Activated naive CD8-positive, alpha-beta T cell treated with anti-CD3 and anti-CD28 coated beads, Interleukin-2, amount 10 ng/mL, durations not matched to agents 7 days and 5 days (primary cell): ENCODE measurements at regions of chr1 and their contacts with region 1.

Region 1: DNA sequence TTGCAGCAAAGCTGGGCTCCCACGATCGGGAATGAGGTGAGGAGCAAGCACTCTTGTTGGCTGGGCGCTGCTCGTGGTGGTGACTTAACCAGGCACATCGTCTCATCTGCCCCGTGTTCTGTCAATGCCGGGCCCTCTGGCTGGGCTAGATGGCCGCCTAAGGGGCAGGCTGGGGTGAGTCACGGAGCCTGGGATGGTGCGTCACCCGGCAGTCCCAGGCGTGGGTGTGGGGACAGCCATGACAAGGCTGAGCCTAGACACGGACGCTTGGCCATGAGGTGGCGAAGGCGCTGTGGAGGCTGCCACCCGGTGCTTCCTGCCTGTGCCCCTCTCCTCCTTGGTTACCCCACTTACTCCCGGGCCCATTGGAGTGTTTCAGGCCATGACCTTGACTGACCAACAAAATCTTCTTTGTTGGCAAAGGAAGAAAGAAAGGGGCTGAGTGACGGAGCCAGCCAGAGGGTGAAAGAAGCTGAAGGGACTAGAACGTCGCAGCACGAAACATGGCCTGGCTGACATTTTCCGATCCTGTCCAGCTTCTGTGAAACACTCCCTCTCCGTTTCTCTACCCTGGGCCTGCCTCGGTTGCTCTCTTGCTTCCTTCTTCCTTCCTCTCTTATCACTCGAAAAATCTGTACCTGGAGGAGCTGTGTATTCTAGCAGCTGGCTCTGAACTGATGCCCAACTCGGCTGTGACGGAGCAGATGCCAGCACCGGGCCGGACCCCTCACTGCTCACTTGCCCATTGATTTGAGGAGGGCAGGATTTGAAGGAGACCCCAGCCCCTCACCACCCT is 596 bp downstream of the CD247 start:
- DNase-seq: peak; percentile 78
- ATAC-seq: peak; percentile 80
- H3K4me3 Mint-ChIP-seq: peak overlapping the region; percentile 96
- H3K27ac Mint-ChIP-seq: peak overlapping the region; percentile 98
- H3K4me1 Mint-ChIP-seq: peaks cover 28% of the 10 kb centered on the region
- H3K27me3 Mint-ChIP-seq: no peaks in the 10 kb centered on the region

Region 2: DNA sequence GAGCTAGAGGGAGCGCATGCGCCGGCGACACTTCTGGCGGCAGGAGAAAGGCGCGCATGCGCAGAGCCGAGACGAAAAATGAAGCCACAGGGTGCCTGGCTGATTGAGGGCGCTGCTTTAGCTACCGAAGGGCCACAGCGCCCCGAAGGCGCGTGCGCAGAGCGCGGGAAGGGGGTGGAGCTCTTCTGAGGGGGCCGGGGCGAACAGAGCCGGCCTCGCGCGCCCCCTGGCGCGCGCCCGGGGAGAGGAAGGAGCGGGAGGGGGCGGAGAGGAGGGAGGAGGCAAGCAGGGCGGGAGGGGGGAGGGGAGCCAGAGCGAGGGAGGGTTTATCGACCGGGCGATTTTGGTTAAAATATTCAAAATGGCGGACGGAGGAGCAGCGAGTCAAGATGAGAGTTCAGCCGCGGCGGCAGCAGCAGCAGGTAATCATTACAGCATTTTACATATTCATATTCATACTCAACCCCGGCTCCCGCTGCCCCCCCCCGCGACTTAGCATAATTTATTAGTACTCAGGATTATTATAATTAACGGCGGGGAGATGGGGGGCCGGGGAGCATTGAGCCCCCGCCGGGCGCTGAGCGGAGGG is 297.1 kb before region 1 on chr1 and contains the start of gene POU2F1:
- POLR2A ChIA-PET with region 1: interaction called, 16 read pairs
- DNase-seq: peak; percentile 99
- ATAC-seq: peak; percentile 82
- H3K4me3 Mint-ChIP-seq: peak within 1 kb of the TSS; percentile 94
- H3K27ac Mint-ChIP-seq: peak within 1 kb of the TSS; percentile 100
- H3K4me1 Mint-ChIP-seq: peaks cover 32% of the 10 kb centered on the region
- H3K27me3 Mint-ChIP-seq: no peaks in the 10 kb centered on the region
- total RNA-seq, gene POU2F1: 25.6 to 28.0 TPM

Region 3: DNA sequence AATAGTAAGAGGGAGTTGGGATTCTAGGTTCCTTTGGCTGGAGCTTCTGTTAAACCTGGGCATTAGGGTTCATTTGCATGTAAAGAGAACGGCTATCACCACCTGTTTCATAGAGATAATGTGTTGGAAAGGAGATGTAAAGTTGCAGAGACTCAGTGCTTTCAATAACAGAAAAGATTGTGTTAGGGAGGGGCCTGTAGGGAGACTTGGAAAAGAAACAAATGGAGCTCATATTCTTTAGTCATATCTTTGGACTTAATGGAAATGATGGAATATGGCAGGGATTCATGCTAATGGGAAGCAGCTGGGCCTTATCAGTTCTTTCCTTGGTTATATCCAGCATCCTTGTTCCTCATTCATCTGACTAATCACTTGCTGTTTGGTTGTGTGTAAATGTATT is 144.3 kb before region 1 on chr1:
- POLR2A ChIA-PET with region 1: no interaction called
- DNase-seq: no peak
- ATAC-seq: no peak
- H3K4me3 Mint-ChIP-seq: no peak overlapping the region
- H3K27ac Mint-ChIP-seq: no peak overlapping the region
- H3K4me1 Mint-ChIP-seq: no peaks in the 10 kb centered on the region
- H3K27me3 Mint-ChIP-seq: no peaks in the 10 kb centered on the region

Region 4: DNA sequence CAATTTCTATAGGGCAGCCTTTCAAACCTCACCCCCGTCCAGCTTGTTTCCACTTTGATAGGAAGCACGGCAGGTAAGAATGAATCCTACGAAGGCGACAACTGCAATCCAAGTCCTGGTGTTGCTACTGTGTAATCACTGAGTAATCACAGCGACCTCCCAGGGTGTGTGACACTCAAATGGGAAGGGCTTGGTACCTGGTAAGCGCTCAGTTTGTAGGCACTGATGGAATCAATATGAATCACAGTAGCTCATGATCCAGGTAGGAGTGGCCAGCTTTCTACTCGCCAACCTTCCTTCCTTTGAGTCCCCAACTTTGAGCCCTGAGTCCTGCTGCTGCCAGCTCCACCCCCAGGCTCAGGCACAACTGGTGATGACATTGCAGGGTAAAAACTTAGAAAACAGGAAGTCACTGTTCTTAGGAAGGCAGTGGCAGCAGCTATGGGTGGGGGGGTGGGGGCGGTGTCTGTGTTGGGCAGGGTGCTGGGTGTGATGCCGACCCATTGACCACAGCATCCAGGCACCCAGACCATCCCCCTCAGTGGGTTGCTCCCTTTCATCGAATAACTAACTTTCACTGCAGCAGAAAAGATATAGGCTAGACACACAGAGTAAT is 70.1 kb before region 1 on chr1:
- POLR2A ChIA-PET with region 1: interaction called, 63 read pairs
- DNase-seq: peak; percentile 62
- ATAC-seq: peak; percentile 87
- H3K4me3 Mint-ChIP-seq: peak overlapping the region; percentile 79
- H3K27ac Mint-ChIP-seq: peak overlapping the region; percentile 95
- H3K4me1 Mint-ChIP-seq: peaks cover 65% of the 10 kb centered on the region
- H3K27me3 Mint-ChIP-seq: no peaks in the 10 kb centered on the region

Region 5: DNA sequence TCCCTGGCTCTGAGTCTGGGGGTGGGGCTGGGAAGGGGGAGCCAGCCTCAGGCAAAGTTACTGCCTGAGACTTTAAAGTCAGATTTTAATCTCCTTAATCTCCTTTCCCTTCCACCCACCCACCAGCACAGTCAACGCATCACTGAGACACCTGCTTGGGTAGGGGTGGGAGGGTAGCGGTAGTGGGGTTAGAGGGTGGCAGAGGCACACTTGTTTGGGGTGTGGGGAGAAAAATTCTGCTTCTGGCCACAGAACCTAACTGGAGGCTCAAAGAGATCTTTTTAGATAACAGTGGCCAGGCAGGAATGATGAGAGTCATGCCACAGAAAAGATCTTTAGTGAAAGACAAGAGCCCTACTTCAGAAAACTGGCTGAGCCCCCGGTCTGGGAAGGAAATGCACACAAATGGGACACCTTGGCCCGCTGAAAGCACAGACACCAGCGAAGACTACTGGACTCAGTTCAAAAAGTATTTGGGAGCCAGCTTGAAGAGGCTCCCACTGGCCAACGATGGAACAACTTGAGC is 43.5 kb before region 1 on chr1:
- POLR2A ChIA-PET with region 1: interaction called, 19 read pairs
- DNase-seq: no peak
- ATAC-seq: peak; percentile 71
- H3K4me3 Mint-ChIP-seq: peak overlapping the region; percentile 75
- H3K27ac Mint-ChIP-seq: peak overlapping the region; percentile 83
- H3K4me1 Mint-ChIP-seq: peaks cover 60% of the 10 kb centered on the region
- H3K27me3 Mint-ChIP-seq: no peaks in the 10 kb centered on the region

Region 6: DNA sequence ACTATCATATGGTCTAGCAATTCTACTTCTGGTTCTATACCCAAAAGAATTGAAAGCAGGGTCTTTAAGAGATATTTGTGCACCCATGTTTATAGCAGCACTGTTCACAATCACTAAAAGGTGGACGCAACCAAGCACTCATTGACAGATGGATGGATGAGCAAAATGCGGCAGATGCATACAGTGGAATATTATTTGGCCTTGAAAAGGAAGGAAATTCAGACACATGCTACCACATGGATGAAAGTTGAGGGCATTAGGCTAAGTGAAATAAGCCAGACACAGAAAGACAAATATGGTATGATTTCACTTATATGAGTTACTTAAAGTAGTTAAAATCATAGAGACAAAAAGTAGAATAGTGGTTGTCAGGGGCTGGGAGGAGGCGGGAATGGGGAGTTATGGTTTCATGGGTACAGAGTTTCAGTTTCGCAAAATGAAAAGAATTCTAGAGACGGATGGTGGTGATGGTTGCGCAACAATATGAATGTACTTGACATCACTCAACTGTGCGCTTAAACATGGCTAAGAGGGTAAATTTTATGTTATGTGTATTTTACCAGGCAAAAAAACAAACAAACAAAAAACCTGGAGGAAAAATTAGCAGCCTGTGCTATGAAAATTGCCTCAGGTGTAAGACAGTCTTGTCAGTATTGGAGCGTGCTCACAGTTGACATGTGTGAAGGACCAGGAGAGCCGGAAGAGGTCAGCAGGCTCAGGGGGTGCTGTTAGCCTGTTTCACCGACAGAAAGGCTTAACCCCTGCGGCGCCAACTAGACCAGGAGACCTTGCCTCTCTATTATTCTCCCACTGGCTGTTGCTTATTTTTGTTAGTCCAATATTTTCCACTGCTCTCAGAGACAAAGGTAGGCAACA is 25.9 kb before region 1 on chr1:
- POLR2A ChIA-PET with region 1: interaction called, 31 read pairs
- DNase-seq: no peak
- ATAC-seq: peak; percentile 70
- H3K4me3 Mint-ChIP-seq: peak overlapping the region; percentile 85
- H3K27ac Mint-ChIP-seq: peak overlapping the region; percentile 93
- H3K4me1 Mint-ChIP-seq: peaks cover 79% of the 10 kb centered on the region
- H3K27me3 Mint-ChIP-seq: no peaks in the 10 kb centered on the region

Region 7: GRCh38 chr1:167533851-167534300 is 16.1 kb after region 1 on chr1:
- POLR2A ChIA-PET with region 1: interaction called, 25 read pairs
- DNase-seq: peak; percentile 67
- ATAC-seq: peak; percentile 66
- H3K4me3 Mint-ChIP-seq: no peak overlapping the region
- H3K27ac Mint-ChIP-seq: no peak overlapping the region
- H3K4me1 Mint-ChIP-seq: peaks cover 7% of the 10 kb centered on the region
- H3K27me3 Mint-ChIP-seq: peaks cover 8% of the 10 kb centered on the region

Region 8: DNA sequence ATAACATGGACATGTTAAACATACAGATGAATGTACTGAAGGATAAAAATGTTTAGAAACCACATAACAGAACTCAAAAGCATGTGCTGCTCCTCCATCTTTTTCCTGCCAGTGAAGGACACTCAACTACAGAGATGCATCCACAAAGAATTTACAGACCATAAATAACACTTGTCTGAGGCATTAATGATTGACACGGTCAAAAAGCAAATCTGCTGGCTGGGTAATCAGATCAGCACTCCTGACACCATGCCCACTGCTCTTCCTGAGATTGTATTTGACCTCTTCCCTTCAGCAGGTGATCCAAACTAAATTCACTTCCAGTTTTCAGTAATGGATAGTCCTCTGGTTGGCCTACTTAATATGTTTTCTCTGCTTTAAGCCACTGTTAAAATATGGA is 29.2 kb after region 1 on chr1:
- POLR2A ChIA-PET with region 1: no interaction called
- DNase-seq: no peak
- ATAC-seq: no peak
- H3K4me3 Mint-ChIP-seq: no peak overlapping the region
- H3K27ac Mint-ChIP-seq: no peak overlapping the region
- H3K4me1 Mint-ChIP-seq: peaks cover 21% of the 10 kb centered on the region
- H3K27me3 Mint-ChIP-seq: no peaks in the 10 kb centered on the region

Region 9: GRCh38 chr1:167617153-167618147 is 99.7 kb after region 1 on chr1:
- POLR2A ChIA-PET with region 1: no interaction called
- DNase-seq: peak; percentile 44
- ATAC-seq: peak; percentile 81
- H3K4me3 Mint-ChIP-seq: peak overlapping the region; percentile 83
- H3K27ac Mint-ChIP-seq: peak overlapping the region; percentile 94
- H3K4me1 Mint-ChIP-seq: peaks cover 49% of the 10 kb centered on the region
- H3K27me3 Mint-ChIP-seq: no peaks in the 10 kb centered on the region